GM12878 (cell line): ENCODE measurements at regions of chr11 and their contacts with region 1.

Region 1: GRCh38 chr11:18000760-18001159 is 12.1 kb downstream of the SERGEF start:
- DNase-seq: no peak
- ATAC-seq: peak; percentile 49
- H3K4me3 ChIP-seq: no peak overlapping the region
- H3K27ac ChIP-seq: no peak overlapping the region
- H3K4me1 ChIP-seq: no peaks in the 10 kb centered on the region
- H3K27me3 ChIP-seq: no peaks in the 10 kb centered on the region
- CTCF ChIP-seq: no peak
- EP300 ChIP-seq: no peak
- POLR2A ChIP-seq: no peak
- RAD21 ChIP-seq: no peak

Region 2: GRCh38 chr11:17986007-17986710 is 14.6 kb before region 1 on chr11:
- CTCF ChIA-PET with region 1: interaction called, 22 read pairs
- POLR2A ChIA-PET with region 1: no interaction called
- RAD21 ChIA-PET with region 1: no interaction called
- SMC1A ChIA-PET with region 1: interaction called, 10 read pairs
- in situ Hi-C with region 1: no loop called
- intact Hi-C with region 1: no loop called
- DNase-seq: no peak
- ATAC-seq: no peak
- H3K4me3 ChIP-seq: no peak overlapping the region
- H3K27ac ChIP-seq: no peak overlapping the region
- H3K4me1 ChIP-seq: no peaks in the 10 kb centered on the region
- H3K27me3 ChIP-seq: no peaks in the 10 kb centered on the region
- CTCF ChIP-seq: no peak
- EP300 ChIP-seq: no peak
- POLR2A ChIP-seq: no peak
- RAD21 ChIP-seq: no peak

Region 3: GRCh38 chr11:18046116-18046777 is 45.5 kb after region 1 on chr11 and contains the start of gene TPH1:
- CTCF ChIA-PET with region 1: no interaction called
- POLR2A ChIA-PET with region 1: no interaction called
- RAD21 ChIA-PET with region 1: no interaction called
- SMC1A ChIA-PET with region 1: no interaction called
- in situ Hi-C with region 1: no loop called
- intact Hi-C with region 1: no loop called
- DNase-seq: no peak
- ATAC-seq: peak; percentile 52
- H3K4me3 ChIP-seq: no peak within 1 kb of the TSS
- H3K27ac ChIP-seq: no peak within 1 kb of the TSS
- H3K4me1 ChIP-seq: no peaks in the 10 kb centered on the region
- H3K27me3 ChIP-seq: no peaks in the 10 kb centered on the region; a peak in 2 of 4 replicates
- CTCF ChIP-seq: no peak
- EP300 ChIP-seq: no peak
- POLR2A ChIP-seq: no peak
- RAD21 ChIP-seq: no peak
- polyA plus RNA-seq, gene TPH1: 0.05 to 0.26 TPM